Activated B cell treated with CpG ODN at 0.5 μM for 24 hours (primary cell): ENCODE measurements at regions of chr17 and their contacts with region 1.

Region 1: DNA sequence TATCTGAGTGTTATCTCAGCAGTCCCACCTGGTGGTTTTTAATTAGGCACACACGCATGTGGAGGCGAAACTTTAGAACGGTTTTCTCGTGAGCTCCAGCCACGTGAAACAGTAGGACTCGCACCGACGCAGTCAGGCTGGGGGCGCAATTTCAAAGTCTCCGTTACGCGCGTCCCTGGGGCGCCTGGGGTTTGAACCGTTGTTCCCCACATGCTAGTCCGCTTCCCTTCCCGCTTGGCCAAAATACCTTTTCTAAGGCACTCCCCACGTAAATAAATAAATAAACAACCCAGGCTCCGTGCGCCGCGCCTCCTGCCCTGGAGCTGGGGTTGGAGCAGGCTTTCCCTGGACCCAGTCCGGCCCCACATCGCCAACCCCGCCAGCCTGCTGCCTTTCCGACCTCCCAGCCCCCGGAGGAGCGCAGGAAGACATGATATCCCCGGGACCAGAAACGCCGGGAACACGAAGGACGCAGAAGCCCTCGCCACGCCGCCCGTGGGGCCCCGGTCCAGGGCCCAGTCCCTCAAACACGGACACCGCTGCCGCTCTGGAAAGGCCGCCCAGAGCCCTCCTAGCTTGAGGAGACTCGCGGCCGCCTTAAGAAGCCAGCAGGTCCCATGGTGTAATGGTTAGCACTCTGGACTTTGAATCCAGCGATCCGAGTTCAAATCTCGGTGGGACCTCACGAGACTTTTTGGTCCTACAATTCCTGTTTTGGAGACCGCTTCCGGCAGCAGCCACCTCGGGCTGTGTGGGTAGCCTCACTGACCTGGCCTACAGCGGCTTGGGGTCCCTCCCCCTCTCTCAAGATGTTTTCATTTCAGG is 18.2 kb downstream of the GNGT2 start:
- DNase-seq: peak; percentile 96
- ATAC-seq: peak; percentile 40
- H3K4me3 Mint-ChIP-seq: peak overlapping the region; percentile 92
- H3K27ac Mint-ChIP-seq: peak overlapping the region; percentile 97
- H3K4me1 Mint-ChIP-seq: peaks cover 38% of the 10 kb centered on the region
- H3K27me3 Mint-ChIP-seq: peaks cover 2% of the 10 kb centered on the region
- CTCF ChIP-seq: no peak

Region 2: DNA sequence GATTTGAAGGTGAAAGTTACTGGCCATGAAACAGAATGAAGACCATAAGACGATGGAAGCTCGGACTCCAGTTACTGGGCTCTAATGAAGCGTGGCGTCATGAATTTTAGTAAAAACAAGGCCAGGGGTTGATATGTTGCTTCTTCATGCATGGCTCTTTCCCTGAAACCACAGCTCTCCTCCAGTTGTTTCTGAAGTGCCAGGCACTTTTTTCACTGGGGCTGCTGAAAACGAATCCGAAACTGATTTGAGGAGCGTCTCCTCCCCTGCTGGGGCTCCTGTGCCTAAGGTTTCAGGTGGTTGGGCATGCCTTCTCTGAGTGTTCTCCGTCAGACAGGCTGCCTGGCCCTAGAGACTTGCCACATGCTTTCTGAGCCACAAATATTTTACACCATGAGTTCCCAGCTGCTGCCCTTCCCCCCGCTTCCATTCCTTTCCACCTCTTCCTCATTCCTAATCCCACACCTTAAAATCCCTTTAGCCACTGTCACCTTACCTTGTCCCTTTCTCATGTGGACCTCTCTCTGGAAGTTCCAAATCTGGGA is 1986.6 kb before region 1 on chr17:
- CTCF ChIA-PET with region 1: no interaction called
- POLR2A ChIA-PET with region 1: interaction called, 6 read pairs
- intact Hi-C with region 1: loop called (anchors 10 kb)
- DNase-seq: peak; percentile 45
- ATAC-seq: peak; percentile 78
- H3K4me3 Mint-ChIP-seq: peak overlapping the region; percentile 80
- H3K27ac Mint-ChIP-seq: peak overlapping the region; percentile 98
- H3K4me1 Mint-ChIP-seq: peaks cover 74% of the 10 kb centered on the region
- H3K27me3 Mint-ChIP-seq: no peaks in the 10 kb centered on the region
- CTCF ChIP-seq: no peak

Region 3: GRCh38 chr17:49180303-49180702 is 11.8 kb before region 1 on chr17:
- CTCF ChIA-PET with region 1: interaction called, 42 read pairs
- POLR2A ChIA-PET with region 1: interaction called, 8 read pairs
- intact Hi-C with region 1: loop called (anchors 1 kb)
- DNase-seq: peak; percentile 58
- ATAC-seq: peak; percentile 52
- H3K4me3 Mint-ChIP-seq: no peak overlapping the region
- H3K27ac Mint-ChIP-seq: no peak overlapping the region
- H3K4me1 Mint-ChIP-seq: peaks cover 4% of the 10 kb centered on the region
- H3K27me3 Mint-ChIP-seq: peaks cover 1% of the 10 kb centered on the region
- CTCF ChIP-seq: peak; percentile 54

Region 4: DNA sequence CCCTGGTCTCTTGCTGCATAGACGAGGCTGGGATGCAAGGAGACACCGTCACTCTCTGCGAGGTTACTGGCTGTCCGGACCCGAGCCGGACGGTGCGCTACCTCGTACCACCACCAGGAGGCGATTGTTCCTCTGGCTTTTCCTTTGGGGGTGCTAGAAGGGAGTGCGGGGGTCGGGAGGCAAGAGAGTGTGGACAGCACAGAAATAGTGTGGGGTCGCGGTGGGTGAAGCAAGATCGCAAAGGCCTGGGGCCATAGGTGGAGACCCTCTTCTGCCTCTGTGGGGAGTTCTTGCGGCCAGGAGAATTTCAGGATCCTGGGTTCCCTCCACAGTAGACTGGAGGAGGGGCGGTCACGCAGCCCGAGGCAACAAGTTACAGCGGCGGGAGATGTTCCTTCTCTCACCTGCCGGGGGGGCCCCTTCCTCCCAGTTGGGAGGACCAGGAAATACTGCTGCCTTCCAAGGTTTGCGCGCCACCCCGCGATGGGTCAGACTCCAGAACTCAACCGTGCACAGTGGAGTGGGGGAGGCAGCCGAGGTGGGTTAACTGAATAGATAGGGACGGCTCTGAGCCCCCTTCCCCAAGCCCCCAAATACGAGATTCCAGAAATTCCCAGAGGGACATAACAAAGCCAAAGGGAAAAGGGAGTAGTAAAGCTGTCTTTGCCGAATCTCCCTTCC is 31.5 kb after region 1 on chr17:
- CTCF ChIA-PET with region 1: interaction called, 91 read pairs
- POLR2A ChIA-PET with region 1: interaction called, 259 read pairs
- intact Hi-C with region 1: loop called (anchors 1 kb)
- DNase-seq: peak; percentile 67
- ATAC-seq: peak; percentile 23
- H3K4me3 Mint-ChIP-seq: peak overlapping the region; percentile 79
- H3K27ac Mint-ChIP-seq: peak overlapping the region; percentile 41
- H3K4me1 Mint-ChIP-seq: peaks cover 42% of the 10 kb centered on the region
- H3K27me3 Mint-ChIP-seq: peaks cover 6% of the 10 kb centered on the region
- CTCF ChIP-seq: no peak

Region 5: DNA sequence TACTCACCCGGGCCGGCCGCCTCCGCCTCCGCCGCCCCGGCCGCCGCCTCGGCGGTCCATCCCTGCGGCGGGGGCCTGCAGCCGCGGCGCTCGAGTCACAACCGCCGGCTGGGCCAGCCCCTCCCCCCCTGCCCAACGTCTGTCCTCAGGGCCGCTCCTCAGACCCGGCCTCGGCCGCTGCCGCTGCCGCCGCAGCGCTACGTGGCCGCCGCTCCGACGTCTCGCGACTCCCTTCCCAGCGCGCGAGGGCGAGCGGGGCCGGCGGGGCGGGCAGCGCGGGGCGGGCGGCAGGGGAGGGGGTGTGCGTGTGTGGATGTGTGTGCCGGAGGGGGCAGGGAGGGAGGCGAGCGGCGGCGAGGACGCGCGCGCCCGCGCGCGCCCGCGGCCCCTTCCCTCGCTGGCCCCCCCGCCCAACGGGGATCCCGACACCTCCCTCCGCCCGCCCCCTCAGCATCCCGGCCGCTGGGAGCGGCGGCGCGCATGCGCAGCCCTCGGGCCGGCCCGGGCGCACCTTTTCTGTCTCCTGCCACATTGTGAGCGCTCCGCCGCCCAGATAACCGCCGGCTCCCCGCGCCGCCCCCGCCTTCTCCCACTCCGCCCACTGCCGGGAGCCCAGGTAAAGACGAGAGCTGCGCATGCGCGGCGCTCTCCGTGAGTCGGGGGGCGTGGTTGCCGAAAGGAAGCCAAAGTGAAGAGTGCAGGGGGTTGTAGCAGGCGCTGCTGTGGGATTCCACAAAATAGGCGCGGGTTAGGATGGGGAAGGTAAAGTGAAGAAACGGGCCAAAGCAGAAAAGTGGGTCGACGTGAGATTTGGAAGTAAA is 170.0 kb after region 1 on chr17 and contains the start of gene ZNF652:
- CTCF ChIA-PET with region 1: interaction called, 3 read pairs
- POLR2A ChIA-PET with region 1: interaction called, 3 read pairs
- intact Hi-C with region 1: loop called (anchors 2 kb)
- DNase-seq: peak; percentile 95
- ATAC-seq: peak; percentile 69
- H3K4me3 Mint-ChIP-seq: peak within 1 kb of the TSS; percentile 96
- H3K27ac Mint-ChIP-seq: peak within 1 kb of the TSS; percentile 96
- H3K4me1 Mint-ChIP-seq: peaks cover 61% of the 10 kb centered on the region
- H3K27me3 Mint-ChIP-seq: no peaks in the 10 kb centered on the region
- CTCF ChIP-seq: no peak
- total RNA-seq, gene ZNF652: 37.1 and 40.6 TPM in 2 replicates

Region 6: GRCh38 chr17:49788478-49789242 is 596.5 kb after region 1 on chr17 and contains the start of gene KAT7:
- CTCF ChIA-PET with region 1: no interaction called
- POLR2A ChIA-PET with region 1: no interaction called
- intact Hi-C with region 1: loop called (anchors 5 kb)
- DNase-seq: peak; percentile 90
- ATAC-seq: peak; percentile 86
- H3K4me3 Mint-ChIP-seq: peak within 1 kb of the TSS; percentile 94
- H3K27ac Mint-ChIP-seq: peak within 1 kb of the TSS; percentile 96
- H3K4me1 Mint-ChIP-seq: peaks cover 42% of the 10 kb centered on the region
- H3K27me3 Mint-ChIP-seq: no peaks in the 10 kb centered on the region
- CTCF ChIP-seq: no peak
- total RNA-seq, gene KAT7: 95.0 and 95.8 TPM in 2 replicates